ENCODE measurements at regions of chr1 and their contacts with region 1.

Region 1: DNA sequence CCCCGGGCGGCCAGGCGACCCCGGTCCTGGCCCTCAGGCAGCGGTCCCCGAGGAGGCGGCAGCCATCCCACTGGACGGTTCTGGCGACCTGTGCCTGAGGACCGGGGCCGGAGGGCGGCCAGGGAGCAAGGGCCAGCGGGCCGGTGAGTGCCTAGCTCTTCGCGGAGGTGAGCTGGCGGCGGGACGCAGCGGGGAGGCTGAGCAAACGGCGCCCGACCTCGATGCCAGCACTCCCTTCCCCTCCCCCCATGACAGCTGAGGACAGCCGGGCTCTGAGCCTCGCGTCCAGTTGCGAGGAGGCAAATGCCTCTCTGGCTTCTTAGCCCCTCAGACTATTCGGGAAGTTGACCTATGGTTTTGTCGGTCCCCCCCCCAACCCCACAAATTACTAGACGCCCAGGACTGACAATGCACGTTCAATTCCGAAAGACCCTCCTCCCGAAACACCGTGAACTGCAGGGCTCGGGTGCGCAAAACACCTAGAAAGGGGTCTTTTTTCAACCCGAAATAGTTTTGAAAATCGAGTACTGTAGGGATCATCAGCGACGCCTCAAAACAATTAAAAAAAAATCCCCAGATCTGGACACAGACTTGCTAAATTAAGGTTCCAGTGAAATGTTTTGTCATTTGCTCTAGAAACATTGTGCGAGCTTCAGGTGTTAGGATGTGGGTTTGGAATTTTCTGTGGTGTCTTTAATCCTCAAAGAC is 8.3 kb downstream of the CDKN2C start:
- DNase-seq: peak in 1 of 3 donors; percentile 46
- H3K4me3 ChIP-seq: peak overlapping the region in 6 of 7 experiments; percentile 57 to 85 (median 67)
- H3K27ac ChIP-seq: peak overlapping the region in 1 of 2 experiments; percentile 74
- H3K4me1 ChIP-seq: peaks cover 2 to 25% (median 24%) of the 10 kb centered on the region in 4 experiments
- H3K27me3 ChIP-seq: peaks cover 16 to 76% (median 45%) of the 10 kb centered on the region in 5 experiments

Region 2: DNA sequence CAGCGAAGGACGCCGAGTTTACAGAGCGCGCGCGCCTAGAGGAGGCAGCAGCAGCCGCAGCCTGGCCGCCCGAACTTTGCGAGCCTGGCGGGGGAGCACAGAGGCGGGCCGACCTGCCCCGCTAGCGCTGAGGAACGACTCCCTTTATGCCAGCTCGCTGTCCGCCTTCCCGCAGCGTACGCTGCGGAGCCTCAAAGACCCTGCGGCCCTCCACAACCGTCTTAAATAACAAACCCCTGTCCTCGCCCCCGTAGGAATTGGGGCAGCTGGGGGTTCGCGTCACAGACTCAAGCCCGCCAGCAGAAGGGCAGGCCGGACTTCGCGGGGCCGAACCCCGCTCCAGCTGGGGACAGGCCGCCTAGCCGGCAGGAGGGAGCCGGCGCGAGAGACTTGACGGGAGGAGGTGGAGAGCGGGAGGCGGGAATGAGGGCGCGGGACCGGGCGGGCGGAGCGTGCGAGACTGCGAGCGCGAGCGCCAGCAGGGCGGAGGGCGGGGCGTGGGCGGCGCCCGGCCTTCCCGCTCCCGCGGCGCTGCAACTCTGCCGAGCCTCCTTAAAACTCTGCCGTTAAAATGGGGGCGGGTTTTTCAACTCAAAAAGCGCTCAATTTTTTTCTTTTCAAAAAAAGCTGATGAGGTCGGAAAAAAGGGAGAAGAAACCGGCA is 10.0 kb before region 1 on chr1:
- CTCF ChIA-PET with region 1: interaction called, 14 read pairs
- POLR2A ChIA-PET with region 1: interaction called, 7 read pairs
- DNase-seq: peak; percentile 86 to 92 (median 89)
- H3K4me3 ChIP-seq: peak overlapping the region; percentile 85 to 99 (median 97)
- H3K27ac ChIP-seq: peak overlapping the region; percentile 64 to 85
- H3K4me1 ChIP-seq: peaks cover 8 to 41% (median 18%) of the 10 kb centered on the region in 4 experiments
- H3K27me3 ChIP-seq: peaks cover 0 to 2% (median 0%) of the 10 kb centered on the region in 5 experiments